ENCODE measurements at regions of chr7 and their contacts with region 1.

Region 1: GRCh38 chr7:119748991-119749390 is 524.0 kb upstream of the KCND2 start:
- DNase-seq: no peak
- ATAC-seq: no peak

Region 2: GRCh38 chr7:119665791-119666190 is 83.2 kb before region 1 on chr7:
- intact Hi-C with region 1: loop called (anchors 5 kb)
- DNase-seq: no peak
- ATAC-seq: no peak

Region 3: DNA sequence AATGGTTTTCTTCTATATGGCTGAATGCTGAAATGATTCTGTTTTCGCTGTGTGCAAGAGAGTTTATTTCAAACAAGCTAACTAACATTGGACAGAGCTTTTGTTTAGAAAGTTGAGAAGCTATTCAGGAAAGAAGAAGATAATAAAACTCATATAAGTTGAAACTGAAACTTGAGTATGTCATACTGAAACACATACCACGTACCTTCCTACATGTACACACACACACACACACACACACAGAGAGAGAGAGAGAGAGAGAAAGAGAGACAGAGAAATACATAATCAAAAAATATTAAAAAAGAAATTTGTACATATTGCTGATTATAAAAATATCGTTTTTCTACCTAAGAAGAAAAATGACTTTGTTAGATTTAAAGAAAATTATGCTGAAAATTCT is 37.9 kb before region 1 on chr7:
- intact Hi-C with region 1: no loop called
- DNase-seq: no peak
- ATAC-seq: no peak

Measured in sciatic nerve (tissue), 2 donors.